Activated CD8-positive, alpha-beta T cell treated with anti-CD3 and anti-CD28 coated beads, Interleukin-2, amount 10 ng/mL, durations not matched to agents 7 days and 5 days (primary cell): ENCODE measurements at regions of chr11 and their contacts with region 1.

Region 1: GRCh38 chr11:60855726-60856633 is at the start of gene PTGDR2:
- DNase-seq: peak; percentile 51
- ATAC-seq: peak; percentile 46
- H3K4me3 Mint-ChIP-seq: peak within 1 kb of the TSS; percentile 63
- H3K27ac Mint-ChIP-seq: peak within 1 kb of the TSS; percentile 83
- H3K4me1 Mint-ChIP-seq: peaks cover 63% of the 10 kb centered on the region
- H3K27me3 Mint-ChIP-seq: no peaks in the 10 kb centered on the region
- total RNA-seq, gene PTGDR2: 3.3 to 3.4 TPM

Region 2: GRCh38 chr11:60786811-60787567 is 69.0 kb before region 1 on chr11:
- CTCF ChIA-PET with region 1: no interaction called
- POLR2A ChIA-PET with region 1: no interaction called
- DNase-seq: no peak
- ATAC-seq: no peak
- H3K4me3 Mint-ChIP-seq: no peak overlapping the region
- H3K27ac Mint-ChIP-seq: no peak overlapping the region
- H3K4me1 Mint-ChIP-seq: no peaks in the 10 kb centered on the region
- H3K27me3 Mint-ChIP-seq: no peaks in the 10 kb centered on the region

Region 3: DNA sequence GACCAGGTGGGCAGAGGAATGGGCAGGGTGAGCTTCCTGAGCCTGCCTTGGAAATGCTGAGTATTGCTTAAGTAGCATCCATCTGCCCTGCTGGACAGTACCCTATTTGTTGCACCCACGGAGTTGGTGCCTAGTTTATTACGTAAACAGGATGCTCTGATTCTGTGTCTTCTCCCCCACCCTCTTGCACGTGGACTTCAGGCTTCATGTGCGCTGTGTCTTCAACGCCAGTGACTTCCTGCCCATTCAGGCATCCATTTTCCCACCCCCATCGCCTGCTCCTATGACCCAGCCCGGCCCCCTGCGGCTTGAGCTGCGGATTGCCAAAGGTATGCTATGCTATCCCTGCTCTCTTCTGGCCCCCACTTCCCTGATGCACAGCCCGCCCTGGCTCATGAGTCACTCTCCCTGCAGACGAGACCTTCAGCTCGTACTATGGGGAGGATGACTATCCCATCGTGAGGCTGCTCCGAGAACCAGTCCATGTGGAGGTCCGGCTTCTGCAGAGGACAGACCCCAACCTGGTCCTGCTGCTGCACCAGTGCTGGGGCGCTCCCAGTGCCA is 17.1 kb after region 1 on chr11:
- CTCF ChIA-PET with region 1: interaction called, 12 read pairs
- POLR2A ChIA-PET with region 1: interaction called, 4 read pairs
- DNase-seq: no peak
- ATAC-seq: no peak
- H3K4me3 Mint-ChIP-seq: no peak overlapping the region
- H3K27ac Mint-ChIP-seq: peak overlapping the region; percentile 87
- H3K4me1 Mint-ChIP-seq: peaks cover 68% of the 10 kb centered on the region
- H3K27me3 Mint-ChIP-seq: no peaks in the 10 kb centered on the region

Region 4: GRCh38 chr11:61187505-61188130 is 331.6 kb after region 1 on chr11:
- CTCF ChIA-PET with region 1: no interaction called
- POLR2A ChIA-PET with region 1: no interaction called
- DNase-seq: peak; percentile 87
- ATAC-seq: peak; percentile 87
- H3K4me3 Mint-ChIP-seq: no peak overlapping the region
- H3K27ac Mint-ChIP-seq: no peak overlapping the region
- H3K4me1 Mint-ChIP-seq: peaks cover 3% of the 10 kb centered on the region
- H3K27me3 Mint-ChIP-seq: peaks cover 4% of the 10 kb centered on the region